ENCODE measurements at regions of chr6 and their contacts with region 1.

Region 1: DNA sequence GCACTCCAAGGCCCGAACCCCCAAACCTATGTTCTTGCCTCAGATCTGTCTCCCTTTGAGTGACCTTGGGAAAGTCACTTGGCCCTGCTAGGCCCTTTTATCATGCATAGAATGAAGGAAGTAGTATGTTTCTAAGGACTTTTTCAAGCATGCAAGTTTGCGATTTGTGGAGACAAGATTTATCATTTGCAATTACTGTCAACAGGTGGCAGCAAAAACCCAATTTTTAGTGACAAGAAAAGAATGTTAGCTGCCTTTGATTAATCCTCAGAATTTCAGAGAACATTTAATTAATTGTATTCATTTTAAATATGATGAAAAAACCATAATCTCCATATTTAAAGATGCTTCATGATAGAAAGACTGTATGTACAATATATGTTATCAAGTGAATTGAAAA is 28.3 kb upstream of the PREP start:
- DNase-seq: no peak
- ATAC-seq: peak; percentile 65
- H3K4me3 ChIP-seq: no peak overlapping the region
- H3K27ac ChIP-seq: no peak overlapping the region
- H3K4me1 ChIP-seq: peaks cover 3% of the 10 kb centered on the region
- H3K27me3 ChIP-seq: no peaks in the 10 kb centered on the region
- CTCF ChIP-seq: peak; percentile 47 to 58 (median 57); a peak in 5 of 6 replicates
- EP300 ChIP-seq: no peak
- POLR2A ChIP-seq: no peak
- RAD21 ChIP-seq: peak; percentile 81

Region 2: DNA sequence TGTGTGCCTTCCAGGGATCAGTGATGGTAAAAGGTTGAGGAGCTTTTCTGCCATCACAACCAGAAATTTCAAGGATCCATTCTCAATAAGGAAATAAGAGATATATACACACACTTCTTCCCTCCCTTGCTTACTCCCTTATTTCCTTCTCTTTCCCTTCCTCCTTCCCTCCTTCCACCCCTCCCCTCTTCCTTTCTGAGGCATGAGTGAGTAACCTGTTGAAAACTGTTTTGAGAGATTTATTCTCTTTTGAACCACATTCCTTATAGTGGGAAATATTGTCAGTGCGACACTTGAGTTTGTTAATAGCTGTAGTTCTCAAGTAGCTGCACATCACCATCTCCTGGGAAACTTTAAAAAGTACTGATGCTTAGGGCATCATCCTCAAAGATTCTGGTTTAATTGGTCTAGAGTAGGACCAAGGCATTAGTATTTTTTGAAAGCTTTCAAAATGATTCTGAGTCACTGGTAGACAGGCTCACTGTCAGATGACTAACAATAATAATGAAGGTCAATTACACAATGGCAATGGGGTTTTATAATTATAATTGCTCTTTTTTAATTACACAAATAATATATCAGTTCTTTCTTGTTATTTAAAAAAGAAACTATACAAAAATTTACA is 361.3 kb before region 1 on chr6:
- CTCF ChIA-PET with region 1: no interaction called
- POLR2A ChIA-PET with region 1: no interaction called
- RAD21 ChIA-PET with region 1: no interaction called
- SMC1A ChIA-PET with region 1: no interaction called
- in situ Hi-C with region 1: no loop called
- intact Hi-C with region 1: no loop called
- DNase-seq: no peak
- ATAC-seq: no peak
- H3K4me3 ChIP-seq: no peak overlapping the region
- H3K27ac ChIP-seq: no peak overlapping the region
- H3K4me1 ChIP-seq: no peaks in the 10 kb centered on the region
- H3K27me3 ChIP-seq: no peaks in the 10 kb centered on the region
- CTCF ChIP-seq: no peak
- EP300 ChIP-seq: no peak
- POLR2A ChIP-seq: no peak
- RAD21 ChIP-seq: no peak

Region 3: DNA sequence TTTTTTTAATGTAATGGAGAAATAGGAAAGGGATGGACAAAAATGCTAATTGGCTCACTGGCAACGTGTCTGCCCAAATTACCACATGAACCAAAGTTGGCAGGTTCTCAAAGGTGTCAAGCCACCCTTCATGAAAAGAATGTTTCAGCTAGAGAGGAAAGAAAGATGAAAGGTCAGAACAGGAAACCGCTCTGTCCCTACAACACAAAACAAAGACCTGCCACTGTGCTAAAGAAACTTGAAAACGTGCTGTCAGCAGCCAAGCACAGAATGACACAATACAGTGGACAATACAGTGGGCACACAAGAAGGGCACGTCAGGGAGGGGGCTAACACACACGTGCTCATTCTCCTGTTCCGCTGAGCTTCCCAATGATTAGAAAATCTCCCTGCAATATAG is 33.2 kb before region 1 on chr6:
- CTCF ChIA-PET with region 1: interaction called, 7 read pairs
- POLR2A ChIA-PET with region 1: no interaction called
- RAD21 ChIA-PET with region 1: interaction called, 11 read pairs
- SMC1A ChIA-PET with region 1: interaction called, 12 read pairs
- in situ Hi-C with region 1: no loop called
- intact Hi-C with region 1: no loop called
- DNase-seq: no peak
- ATAC-seq: no peak
- H3K4me3 ChIP-seq: no peak overlapping the region
- H3K27ac ChIP-seq: no peak overlapping the region
- H3K4me1 ChIP-seq: peaks cover 2% of the 10 kb centered on the region; the same call in 1 of the 2 replicates
- H3K27me3 ChIP-seq: no peaks in the 10 kb centered on the region
- CTCF ChIP-seq: no peak
- EP300 ChIP-seq: no peak
- POLR2A ChIP-seq: no peak
- RAD21 ChIP-seq: no peak

Region 4: DNA sequence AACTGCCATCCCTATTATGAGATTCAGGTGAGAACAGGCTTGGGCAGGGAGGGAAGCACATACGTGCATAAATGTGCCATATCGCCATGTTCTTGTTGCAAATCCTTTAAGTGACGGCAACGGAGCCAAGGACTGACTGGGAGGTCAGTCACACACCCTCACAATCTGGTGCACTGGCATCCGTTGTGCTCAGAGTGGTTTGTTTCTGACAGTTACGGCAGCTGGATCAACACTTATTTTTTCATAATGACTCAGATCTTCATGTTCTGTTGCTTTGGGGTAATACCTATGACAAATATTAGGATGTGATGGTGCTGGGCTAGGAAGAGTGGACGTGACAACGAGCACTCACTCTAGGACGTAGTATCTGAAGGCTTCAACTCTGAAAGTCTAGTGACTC is 27.8 kb after region 1 on chr6:
- CTCF ChIA-PET with region 1: interaction called, 91 read pairs
- POLR2A ChIA-PET with region 1: interaction called, 13 read pairs
- RAD21 ChIA-PET with region 1: interaction called, 99 read pairs
- SMC1A ChIA-PET with region 1: interaction called, 89 read pairs
- in situ Hi-C with region 1: no loop called
- intact Hi-C with region 1: no loop called
- DNase-seq: peak; percentile 98
- ATAC-seq: peak; percentile 91
- H3K4me3 ChIP-seq: no peak overlapping the region
- H3K27ac ChIP-seq: peak overlapping the region; percentile 88
- H3K4me1 ChIP-seq: peaks cover 16% of the 10 kb centered on the region
- H3K27me3 ChIP-seq: no peaks in the 10 kb centered on the region
- CTCF ChIP-seq: no peak
- EP300 ChIP-seq: peak; percentile 99 to 100
- POLR2A ChIP-seq: peak; percentile 80
- RAD21 ChIP-seq: no peak

Region 5: GRCh38 chr6:105560611-105561066 is 129.4 kb after region 1 on chr6:
- CTCF ChIA-PET with region 1: interaction called, 4 read pairs
- POLR2A ChIA-PET with region 1: interaction called, 3 read pairs
- RAD21 ChIA-PET with region 1: interaction called, 3 read pairs
- SMC1A ChIA-PET with region 1: no interaction called
- in situ Hi-C with region 1: no loop called
- intact Hi-C with region 1: loop called (anchors 10 kb)
- DNase-seq: peak; percentile 70
- ATAC-seq: peak; percentile 96
- H3K4me3 ChIP-seq: no peak overlapping the region
- H3K27ac ChIP-seq: peak overlapping the region; percentile 18; the same call in 1 of the 2 replicates
- H3K4me1 ChIP-seq: peaks cover 19% of the 10 kb centered on the region
- H3K27me3 ChIP-seq: no peaks in the 10 kb centered on the region; a peak in 1 of 4 replicates
- CTCF ChIP-seq: no peak
- EP300 ChIP-seq: peak in 1 of 2 experiments; percentile 70; a peak in 2 of 4 replicates
- POLR2A ChIP-seq: no peak
- RAD21 ChIP-seq: no peak

Region 6: DNA sequence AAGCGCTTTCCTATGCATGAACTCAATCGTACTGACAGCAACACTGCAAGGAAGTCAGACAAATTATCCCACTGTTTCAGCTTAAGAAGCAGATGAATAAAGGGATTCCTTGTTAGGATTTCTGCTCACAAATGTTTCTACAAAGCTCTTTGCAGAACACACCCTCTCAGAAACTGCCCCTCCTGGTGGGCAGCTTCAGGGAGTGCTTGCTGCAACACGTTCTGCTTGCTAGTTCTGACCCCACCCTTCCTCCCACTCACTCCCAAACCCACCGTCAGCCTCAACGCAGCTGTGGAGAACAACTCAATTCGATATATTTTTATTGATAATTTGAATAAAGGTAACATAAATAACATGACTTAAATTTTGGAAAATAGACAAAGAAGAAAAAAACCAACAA is 404.1 kb after region 1 on chr6:
- CTCF ChIA-PET with region 1: interaction called, 8 read pairs
- POLR2A ChIA-PET with region 1: no interaction called
- RAD21 ChIA-PET with region 1: interaction called, 11 read pairs
- SMC1A ChIA-PET with region 1: interaction called, 4 read pairs
- in situ Hi-C with region 1: no loop called
- intact Hi-C with region 1: no loop called
- DNase-seq: no peak
- ATAC-seq: peak; percentile 34; the same call in 1 of the 3 replicates
- H3K4me3 ChIP-seq: no peak overlapping the region
- H3K27ac ChIP-seq: no peak overlapping the region
- H3K4me1 ChIP-seq: no peaks in the 10 kb centered on the region
- H3K27me3 ChIP-seq: no peaks in the 10 kb centered on the region; a peak in 1 of 4 replicates
- CTCF ChIP-seq: peak; percentile 8 to 34 (median 16); a peak in 2 of 6 replicates
- EP300 ChIP-seq: no peak
- POLR2A ChIP-seq: no peak
- RAD21 ChIP-seq: peak; percentile 39

Region 7: DNA sequence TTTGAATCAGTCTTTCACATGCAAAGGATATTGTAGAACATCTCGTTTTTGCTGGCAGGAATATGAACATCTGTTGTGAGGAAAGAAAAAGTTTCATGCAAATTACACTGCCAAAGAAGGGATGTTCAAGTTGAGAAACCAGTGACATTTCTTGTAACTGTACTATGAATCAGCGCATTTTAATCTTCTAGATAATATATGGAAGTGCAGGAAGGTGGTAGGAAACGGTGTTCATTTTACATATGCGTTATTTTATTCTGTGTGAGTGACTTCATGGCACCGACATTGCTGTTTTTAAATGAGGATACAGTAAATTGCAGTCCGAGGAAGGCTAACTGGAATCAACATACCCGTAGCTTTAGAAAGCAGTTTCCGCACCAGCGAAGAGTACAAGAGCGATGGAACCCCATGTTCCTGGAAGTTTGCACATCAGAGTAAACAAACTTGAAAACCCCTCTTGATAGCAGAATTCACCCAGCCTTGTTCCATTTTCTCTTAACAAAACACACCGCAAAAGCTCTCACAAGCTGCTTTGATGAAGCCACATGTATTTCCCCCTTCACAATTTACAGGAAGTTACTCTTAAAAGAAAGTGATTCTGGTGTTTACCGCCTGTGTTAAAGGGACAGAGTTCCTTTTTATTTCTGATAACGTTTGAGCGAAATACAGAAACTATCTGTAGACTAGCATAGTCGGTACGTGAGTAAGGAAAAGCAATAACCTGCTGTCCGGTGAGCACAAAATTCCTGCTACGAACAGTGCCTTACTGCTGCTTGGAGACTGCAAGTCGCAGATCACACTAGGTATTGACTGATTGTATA is 666.4 kb after region 1 on chr6:
- CTCF ChIA-PET with region 1: interaction called, 16 read pairs
- POLR2A ChIA-PET with region 1: interaction called, 3 read pairs
- RAD21 ChIA-PET with region 1: interaction called, 10 read pairs
- SMC1A ChIA-PET with region 1: interaction called, 13 read pairs
- in situ Hi-C with region 1: loop called (anchors 10 kb)
- intact Hi-C with region 1: no loop called
- DNase-seq: peak; percentile 78
- ATAC-seq: peak; percentile 68
- H3K4me3 ChIP-seq: peak overlapping the region; percentile 72
- H3K27ac ChIP-seq: peak overlapping the region; percentile 80
- H3K4me1 ChIP-seq: peaks cover 34% of the 10 kb centered on the region
- H3K27me3 ChIP-seq: no peaks in the 10 kb centered on the region
- CTCF ChIP-seq: no peak
- EP300 ChIP-seq: peak; percentile 65 to 68
- POLR2A ChIP-seq: no peak
- RAD21 ChIP-seq: no peak